Activated B cell treated with CpG ODN at 0.5 μM for 24 hours (primary cell): ENCODE measurements at regions of chr20 and their contacts with region 1.

Region 1: GRCh38 chr20:49982346-49983122 is at the start of gene SNAI1:
- DNase-seq: peak; percentile 76
- ATAC-seq: peak; percentile 90
- H3K4me3 Mint-ChIP-seq: peak within 1 kb of the TSS; percentile 72
- H3K27ac Mint-ChIP-seq: peak within 1 kb of the TSS; percentile 68
- H3K4me1 Mint-ChIP-seq: peaks cover 24% of the 10 kb centered on the region
- H3K27me3 Mint-ChIP-seq: no peaks in the 10 kb centered on the region
- CTCF ChIP-seq: no peak
- total RNA-seq, gene SNAI1: 0.61 and 0.67 TPM in 2 replicates

Region 2: GRCh38 chr20:49724408-49725223 is 257.9 kb before region 1 on chr20:
- CTCF ChIA-PET with region 1: no interaction called
- POLR2A ChIA-PET with region 1: no interaction called
- intact Hi-C with region 1: no loop called
- DNase-seq: no peak
- ATAC-seq: peak; percentile 49
- H3K4me3 Mint-ChIP-seq: peak overlapping the region; percentile 28
- H3K27ac Mint-ChIP-seq: peak overlapping the region; percentile 46
- H3K4me1 Mint-ChIP-seq: peaks cover 16% of the 10 kb centered on the region
- H3K27me3 Mint-ChIP-seq: no peaks in the 10 kb centered on the region
- CTCF ChIP-seq: no peak

Region 3: DNA sequence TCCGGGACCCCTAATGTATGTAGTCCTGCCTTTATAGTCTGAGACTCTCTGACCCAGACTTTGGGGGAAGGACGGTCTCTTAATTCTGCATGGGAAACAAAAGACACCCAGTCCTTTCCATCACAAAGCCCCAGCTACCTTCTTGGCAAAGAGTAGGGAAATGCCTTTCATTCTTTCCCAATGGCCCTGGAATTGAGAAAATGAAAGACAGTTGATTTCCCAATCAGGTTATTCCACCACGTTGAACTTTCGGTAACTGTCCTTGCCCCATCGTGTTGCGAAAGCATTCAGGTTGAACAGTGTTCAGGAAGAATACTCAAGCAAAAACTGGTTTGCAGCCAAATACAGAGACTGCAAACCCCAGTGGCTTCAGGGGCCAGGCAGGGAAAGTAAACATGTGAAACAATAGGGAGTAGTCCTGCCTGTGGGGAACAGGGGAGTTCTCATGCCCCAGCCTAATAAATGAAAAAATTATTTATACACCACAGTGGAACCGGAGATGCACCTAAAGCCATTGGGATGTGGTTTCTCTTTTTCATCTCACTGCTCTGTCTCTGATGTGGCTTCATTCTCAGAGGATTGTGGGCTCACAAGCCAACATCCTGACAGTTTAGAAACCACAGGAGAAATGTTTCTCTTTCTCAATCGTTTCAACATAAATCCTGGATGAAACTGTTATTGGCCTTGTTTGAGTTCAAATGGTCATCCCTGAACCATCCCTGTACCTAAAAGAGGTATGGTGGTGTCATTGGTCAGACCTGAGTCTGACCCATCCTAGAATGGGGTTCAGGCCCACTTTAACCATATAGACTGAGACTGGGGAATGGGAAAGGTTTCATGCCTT is 214.1 kb before region 1 on chr20:
- CTCF ChIA-PET with region 1: no interaction called
- POLR2A ChIA-PET with region 1: no interaction called
- intact Hi-C with region 1: no loop called
- DNase-seq: no peak
- ATAC-seq: no peak
- H3K4me3 Mint-ChIP-seq: no peak overlapping the region
- H3K27ac Mint-ChIP-seq: no peak overlapping the region
- H3K4me1 Mint-ChIP-seq: peaks cover 9% of the 10 kb centered on the region
- H3K27me3 Mint-ChIP-seq: no peaks in the 10 kb centered on the region
- CTCF ChIP-seq: no peak

Region 4: GRCh38 chr20:49999329-49999728 is 16.8 kb after region 1 on chr20:
- CTCF ChIA-PET with region 1: interaction called, 7 read pairs
- POLR2A ChIA-PET with region 1: interaction called, 5 read pairs
- intact Hi-C with region 1: loop called (anchors 1 kb)
- DNase-seq: peak; percentile 68
- ATAC-seq: peak; percentile 99
- H3K4me3 Mint-ChIP-seq: peak overlapping the region; percentile 44
- H3K27ac Mint-ChIP-seq: peak overlapping the region; percentile 14
- H3K4me1 Mint-ChIP-seq: peaks cover 24% of the 10 kb centered on the region
- H3K27me3 Mint-ChIP-seq: peaks cover 4% of the 10 kb centered on the region
- CTCF ChIP-seq: no peak

Region 5: DNA sequence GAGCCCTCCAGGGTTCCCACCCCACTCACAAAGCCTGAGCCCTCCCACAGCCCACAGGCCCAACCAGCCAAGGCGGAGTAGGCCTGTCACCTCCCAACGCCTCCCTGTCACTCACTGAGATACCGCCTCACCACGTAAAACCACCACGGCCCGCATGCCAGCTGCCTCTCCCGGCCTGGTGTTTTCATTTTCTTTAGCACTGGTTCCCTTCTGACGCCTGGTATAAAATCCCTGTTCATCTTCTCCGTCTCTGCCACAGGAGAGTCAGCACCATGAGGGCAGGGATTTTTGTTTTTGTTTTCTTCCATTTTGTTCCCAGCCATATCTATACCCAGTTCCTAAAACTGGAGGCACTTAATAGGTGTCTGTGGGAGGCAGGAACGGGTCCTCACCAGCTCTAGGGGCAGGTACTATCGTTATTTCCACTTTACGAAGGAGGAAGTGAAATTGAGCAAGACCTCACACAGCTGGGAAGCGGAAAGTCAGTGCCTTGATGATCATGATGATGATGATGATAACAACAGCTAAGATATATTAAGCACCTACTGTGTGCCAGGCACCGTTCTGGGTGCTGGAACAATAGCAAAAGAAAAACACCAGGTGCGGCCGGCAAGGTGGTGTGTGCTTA is 58.8 kb after region 1 on chr20:
- CTCF ChIA-PET with region 1: interaction called, 5 read pairs
- POLR2A ChIA-PET with region 1: interaction called, 3 read pairs
- intact Hi-C with region 1: loop called (anchors 2 kb)
- DNase-seq: peak; percentile 26
- ATAC-seq: peak; percentile 91
- H3K4me3 Mint-ChIP-seq: peak overlapping the region; percentile 73
- H3K27ac Mint-ChIP-seq: peak overlapping the region; percentile 89
- H3K4me1 Mint-ChIP-seq: peaks cover 20% of the 10 kb centered on the region
- H3K27me3 Mint-ChIP-seq: no peaks in the 10 kb centered on the region
- CTCF ChIP-seq: no peak

Region 6: GRCh38 chr20:50070991-50071888 is 88.7 kb after region 1 on chr20:
- CTCF ChIA-PET with region 1: interaction called, 346 read pairs
- POLR2A ChIA-PET with region 1: interaction called, 35 read pairs
- intact Hi-C with region 1: loop called (anchors 1 kb)
- DNase-seq: peak; percentile 98
- ATAC-seq: peak; percentile 100
- H3K4me3 Mint-ChIP-seq: peak overlapping the region; percentile 48
- H3K27ac Mint-ChIP-seq: no peak overlapping the region
- H3K4me1 Mint-ChIP-seq: peaks cover 4% of the 10 kb centered on the region
- H3K27me3 Mint-ChIP-seq: peaks cover 7% of the 10 kb centered on the region
- CTCF ChIP-seq: peak; percentile 79

Region 7: DNA sequence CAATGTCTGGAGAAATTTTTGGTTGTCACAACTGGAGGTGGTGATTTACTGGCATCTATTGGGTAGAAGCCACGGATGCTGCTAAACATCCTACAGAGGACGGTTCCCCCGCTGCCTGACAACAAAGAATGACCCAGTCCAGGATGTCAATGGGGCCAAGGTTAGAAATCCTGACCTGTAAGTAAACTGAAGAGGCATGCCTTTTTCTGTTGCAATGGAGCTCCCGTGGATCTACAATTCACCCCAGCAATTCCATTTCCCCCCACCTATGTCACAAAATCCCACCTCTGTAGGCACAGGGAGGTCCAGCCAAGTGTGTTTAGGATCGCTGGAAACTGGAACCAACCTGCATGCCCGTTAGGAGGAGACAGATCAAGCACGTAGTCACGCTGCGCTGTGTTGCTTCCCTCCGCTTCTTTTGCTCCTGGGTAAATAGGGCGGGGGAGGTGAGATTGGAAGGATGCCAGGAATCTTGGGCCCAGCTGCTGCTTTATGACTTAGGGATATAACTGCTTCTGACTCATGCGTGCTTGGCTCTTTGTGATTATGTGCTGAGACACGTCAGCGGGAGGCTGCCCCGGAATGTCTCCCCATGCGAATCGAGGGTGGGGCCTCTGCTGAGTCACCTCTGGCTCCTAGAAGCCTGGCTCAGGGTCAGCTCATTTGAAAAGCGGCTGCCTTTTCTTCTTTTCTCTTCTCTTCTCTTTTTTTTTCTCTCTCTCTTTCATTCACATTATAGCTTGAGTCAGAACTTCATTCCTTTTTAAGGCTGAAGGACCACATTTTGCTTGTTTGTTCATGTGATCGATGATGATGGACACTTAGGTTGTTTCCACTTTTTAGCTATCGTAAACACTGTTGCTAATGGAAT is 183.4 kb after region 1 on chr20:
- CTCF ChIA-PET with region 1: interaction called, 34 read pairs
- POLR2A ChIA-PET with region 1: no interaction called
- intact Hi-C with region 1: loop called (anchors 1 kb)
- DNase-seq: peak; percentile 66
- ATAC-seq: peak; percentile 99
- H3K4me3 Mint-ChIP-seq: peak overlapping the region; percentile 68
- H3K27ac Mint-ChIP-seq: peak overlapping the region; percentile 61
- H3K4me1 Mint-ChIP-seq: peaks cover 14% of the 10 kb centered on the region
- H3K27me3 Mint-ChIP-seq: peaks cover 6% of the 10 kb centered on the region
- CTCF ChIP-seq: no peak

Region 8: GRCh38 chr20:50460460-50461267 is 478.1 kb after region 1 on chr20:
- CTCF ChIA-PET with region 1: no interaction called
- POLR2A ChIA-PET with region 1: no interaction called
- intact Hi-C with region 1: loop called (anchors 10 kb)
- DNase-seq: peak; percentile 69
- ATAC-seq: peak; percentile 86
- H3K4me3 Mint-ChIP-seq: no peak overlapping the region
- H3K27ac Mint-ChIP-seq: no peak overlapping the region
- H3K4me1 Mint-ChIP-seq: peaks cover 5% of the 10 kb centered on the region
- H3K27me3 Mint-ChIP-seq: peaks cover 24% of the 10 kb centered on the region
- CTCF ChIP-seq: peak; percentile 42